Keratinocyte (primary cell): ENCODE measurements at regions of chr1 and their contacts with region 1.

Region 1: GRCh38 chr1:201309426-201309825 is 26.1 kb downstream of the PKP1 start:
- DNase-seq: no peak
- H3K4me3 ChIP-seq: no peak overlapping the region
- H3K27ac ChIP-seq: peak overlapping the region; percentile 99
- H3K4me1 ChIP-seq: peaks cover 78% of the 10 kb centered on the region
- H3K27me3 ChIP-seq: no peaks in the 10 kb centered on the region
- CTCF ChIP-seq: peak; percentile 17 to 81 (median 65)

Region 2: GRCh38 chr1:201229771-201230635 is 79.4 kb before region 1 on chr1:
- dilution Hi-C with region 1: loop called (anchors 10 kb)
- DNase-seq: no peak
- H3K4me3 ChIP-seq: no peak overlapping the region
- H3K27ac ChIP-seq: no peak overlapping the region
- H3K4me1 ChIP-seq: peaks cover 9% of the 10 kb centered on the region
- H3K27me3 ChIP-seq: peaks cover 7% of the 10 kb centered on the region
- CTCF ChIP-seq: no peak